Mammary epithelial cell (primary cell): ENCODE measurements at regions of chr9 and their contacts with region 1.

Region 1: GRCh38 chr9:69056191-69056815 is 20.8 kb downstream of the FXN start:
- DNase-seq: no peak
- H3K4me3 ChIP-seq: no peak overlapping the region
- H3K27ac ChIP-seq: no peak overlapping the region
- H3K4me1 ChIP-seq: no peaks in the 10 kb centered on the region
- H3K27me3 ChIP-seq: no peaks in the 10 kb centered on the region
- CTCF ChIP-seq: no peak

Region 2: DNA sequence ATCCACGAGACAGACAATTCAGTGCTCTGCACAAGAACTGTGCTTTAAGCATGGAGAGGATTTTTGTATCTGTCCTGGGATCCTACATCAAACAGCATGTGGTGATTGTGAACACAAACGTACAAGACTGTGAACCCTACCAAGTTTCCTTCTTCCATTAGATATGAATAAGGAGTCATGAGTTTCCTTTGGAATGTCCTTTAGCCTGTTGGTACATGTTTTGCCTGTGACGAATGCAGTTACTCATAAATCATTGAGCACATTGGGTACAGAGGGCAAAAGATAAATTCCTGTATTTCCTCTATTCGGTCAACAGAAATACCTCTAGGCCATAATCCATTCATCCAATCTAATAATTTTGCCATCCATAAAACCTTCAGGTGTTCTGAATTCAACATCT is 40.8 kb after region 1 on chr9:
- CTCF ChIA-PET with region 1: no interaction called
- dilution Hi-C with region 1: no loop called
- in situ Hi-C with region 1: no loop called
- intact Hi-C with region 1: loop called (anchors 1 kb)
- DNase-seq: peak; percentile 93
- H3K4me3 ChIP-seq: no peak overlapping the region
- H3K27ac ChIP-seq: peak overlapping the region; percentile 84
- H3K4me1 ChIP-seq: peaks cover 11% of the 10 kb centered on the region
- H3K27me3 ChIP-seq: no peaks in the 10 kb centered on the region
- CTCF ChIP-seq: no peak

Region 3: GRCh38 chr9:69115621-69116020 is 59.3 kb after region 1 on chr9:
- CTCF ChIA-PET with region 1: no interaction called
- dilution Hi-C with region 1: no loop called
- in situ Hi-C with region 1: no loop called
- intact Hi-C with region 1: no loop called
- DNase-seq: no peak
- H3K4me3 ChIP-seq: no peak overlapping the region
- H3K27ac ChIP-seq: no peak overlapping the region
- H3K4me1 ChIP-seq: peaks cover 5% of the 10 kb centered on the region
- H3K27me3 ChIP-seq: no peaks in the 10 kb centered on the region
- CTCF ChIP-seq: no peak

Region 4: DNA sequence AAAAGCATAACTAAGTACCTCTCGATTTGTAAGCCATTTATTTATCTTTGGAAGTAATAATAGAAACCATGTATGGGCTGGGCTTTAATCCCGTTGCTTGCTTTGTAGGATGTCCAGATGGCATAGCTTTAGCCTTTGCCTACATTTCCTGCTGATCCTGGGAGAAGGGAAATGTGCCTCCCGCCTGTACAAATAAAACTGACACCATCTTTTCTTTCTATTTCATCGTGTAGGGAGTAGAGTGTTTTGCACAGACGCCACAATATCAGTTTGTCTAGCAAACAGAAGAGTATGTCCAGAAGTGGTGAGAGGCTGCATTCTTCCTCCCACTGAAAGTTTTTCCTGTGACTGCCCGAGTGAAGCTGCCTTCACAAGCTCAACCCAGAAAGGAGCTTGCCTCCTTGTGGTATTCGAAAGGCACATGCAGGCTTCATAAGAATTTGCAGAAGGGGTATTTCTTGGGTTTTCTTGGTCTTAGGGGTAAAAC is 93.1 kb after region 1 on chr9:
- CTCF ChIA-PET with region 1: no interaction called
- dilution Hi-C with region 1: no loop called
- in situ Hi-C with region 1: no loop called
- intact Hi-C with region 1: loop called (anchors 1 kb)
- DNase-seq: peak; percentile 42
- H3K4me3 ChIP-seq: peak overlapping the region in 1 of 3 experiments; percentile 4
- H3K27ac ChIP-seq: peak overlapping the region; percentile 38
- H3K4me1 ChIP-seq: peaks cover 8% of the 10 kb centered on the region
- H3K27me3 ChIP-seq: no peaks in the 10 kb centered on the region
- CTCF ChIP-seq: peak; percentile 11 to 50

Region 5: GRCh38 chr9:69193685-69194032 is 137.4 kb after region 1 on chr9:
- CTCF ChIA-PET with region 1: interaction called, 10 read pairs
- dilution Hi-C with region 1: no loop called
- in situ Hi-C with region 1: loop called (anchors 5 kb)
- intact Hi-C with region 1: loop called (anchors 1 kb)
- DNase-seq: no peak
- H3K4me3 ChIP-seq: no peak overlapping the region
- H3K27ac ChIP-seq: no peak overlapping the region
- H3K4me1 ChIP-seq: no peaks in the 10 kb centered on the region
- H3K27me3 ChIP-seq: no peaks in the 10 kb centered on the region
- CTCF ChIP-seq: peak in 1 of 2 donors; percentile 25

Region 6: DNA sequence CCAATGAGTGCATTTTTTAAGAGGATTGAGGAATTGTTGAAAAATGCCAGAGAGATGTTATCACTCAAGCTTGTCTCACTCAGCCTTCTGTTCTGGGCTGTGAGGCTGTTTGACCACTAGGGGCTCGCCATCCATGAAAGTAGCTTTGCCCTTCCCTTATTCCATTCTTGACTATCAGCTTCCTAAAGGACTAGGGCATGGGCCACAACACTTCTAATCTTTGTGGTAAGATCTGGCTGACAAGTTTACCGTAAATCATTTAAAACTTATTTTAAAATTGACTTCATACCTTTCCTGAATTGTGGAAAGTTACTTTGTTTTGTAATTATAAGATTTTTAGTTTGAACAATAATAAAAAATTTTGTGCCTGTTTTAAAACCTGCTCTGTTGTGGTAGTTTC is 167.3 kb after region 1 on chr9:
- CTCF ChIA-PET with region 1: no interaction called
- dilution Hi-C with region 1: no loop called
- in situ Hi-C with region 1: no loop called
- intact Hi-C with region 1: loop called (anchors 1 kb)
- DNase-seq: peak; percentile 49
- H3K4me3 ChIP-seq: no peak overlapping the region
- H3K27ac ChIP-seq: no peak overlapping the region
- H3K4me1 ChIP-seq: no peaks in the 10 kb centered on the region
- H3K27me3 ChIP-seq: no peaks in the 10 kb centered on the region
- CTCF ChIP-seq: peak; percentile 86 to 91